GM13976 (cell line): ENCODE measurements at regions of chr6 and their contacts with region 1.

Region 1: GRCh38 chr6:89599727-89600126 is 38.8 kb downstream of the LYRM2 start:
- DNase-seq: no peak
- CTCF ChIP-seq: no peak

Region 2: GRCh38 chr6:89237158-89237820 is 362.4 kb before region 1 on chr6:
- in situ Hi-C with region 1: no loop called
- DNase-seq: no peak
- CTCF ChIP-seq: no peak

Region 3: DNA sequence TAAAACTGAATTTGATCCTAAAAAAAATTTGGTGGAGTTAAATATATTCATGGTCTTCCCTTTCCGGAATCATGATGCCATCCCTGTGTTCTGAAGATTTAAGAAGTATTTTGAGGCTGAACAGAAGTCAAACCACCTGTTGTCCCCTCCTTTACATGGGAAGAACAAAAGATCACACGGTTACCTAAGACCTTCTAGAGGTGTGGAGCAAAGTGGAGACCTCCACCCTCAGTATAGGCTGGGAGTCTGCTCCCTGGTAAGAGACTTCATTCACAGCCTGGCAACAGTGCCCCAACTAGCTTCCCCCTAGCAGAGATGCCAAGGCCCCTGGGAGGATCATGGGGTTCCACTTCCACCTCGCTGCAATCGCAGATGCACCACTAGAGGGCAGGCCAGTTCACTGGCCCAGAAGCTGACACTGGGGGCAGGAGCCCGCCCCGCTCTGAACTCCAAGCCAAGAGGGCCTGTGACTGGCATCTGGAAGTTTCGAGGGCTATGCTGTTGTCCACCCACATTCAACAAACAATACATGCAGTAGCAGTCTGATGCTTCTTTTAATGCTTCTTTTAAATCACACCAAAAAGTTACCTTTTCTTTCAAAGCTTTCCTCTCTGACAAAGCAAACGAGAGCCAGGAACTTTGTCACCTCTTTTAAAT is 227.8 kb before region 1 on chr6:
- in situ Hi-C with region 1: no loop called
- DNase-seq: peak; percentile 60
- CTCF ChIP-seq: peak; percentile 96

Region 4: DNA sequence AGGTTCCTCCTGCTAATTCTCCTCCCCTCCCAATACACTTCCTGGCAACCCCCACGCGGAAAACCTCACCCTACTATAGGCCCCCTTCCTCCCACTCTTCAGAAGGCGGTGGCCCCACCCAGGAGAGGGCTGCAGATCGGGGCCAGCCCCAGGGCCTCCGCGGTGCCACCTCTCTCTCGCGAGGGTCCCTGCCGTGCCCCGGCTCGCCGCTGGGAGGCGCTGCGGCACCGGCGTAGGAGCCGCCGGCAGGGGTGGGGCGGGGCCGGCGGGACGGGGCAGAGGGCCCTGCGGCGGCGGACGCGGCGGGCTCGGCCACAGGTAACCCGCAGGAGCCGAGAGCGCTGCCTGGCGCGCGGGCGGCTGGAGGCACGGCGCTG is 166.9 kb before region 1 on chr6 and contains the start of gene ANKRD6:
- in situ Hi-C with region 1: loop called (anchors 10 kb)
- DNase-seq: peak; percentile 92
- CTCF ChIP-seq: peak; percentile 97

Region 5: DNA sequence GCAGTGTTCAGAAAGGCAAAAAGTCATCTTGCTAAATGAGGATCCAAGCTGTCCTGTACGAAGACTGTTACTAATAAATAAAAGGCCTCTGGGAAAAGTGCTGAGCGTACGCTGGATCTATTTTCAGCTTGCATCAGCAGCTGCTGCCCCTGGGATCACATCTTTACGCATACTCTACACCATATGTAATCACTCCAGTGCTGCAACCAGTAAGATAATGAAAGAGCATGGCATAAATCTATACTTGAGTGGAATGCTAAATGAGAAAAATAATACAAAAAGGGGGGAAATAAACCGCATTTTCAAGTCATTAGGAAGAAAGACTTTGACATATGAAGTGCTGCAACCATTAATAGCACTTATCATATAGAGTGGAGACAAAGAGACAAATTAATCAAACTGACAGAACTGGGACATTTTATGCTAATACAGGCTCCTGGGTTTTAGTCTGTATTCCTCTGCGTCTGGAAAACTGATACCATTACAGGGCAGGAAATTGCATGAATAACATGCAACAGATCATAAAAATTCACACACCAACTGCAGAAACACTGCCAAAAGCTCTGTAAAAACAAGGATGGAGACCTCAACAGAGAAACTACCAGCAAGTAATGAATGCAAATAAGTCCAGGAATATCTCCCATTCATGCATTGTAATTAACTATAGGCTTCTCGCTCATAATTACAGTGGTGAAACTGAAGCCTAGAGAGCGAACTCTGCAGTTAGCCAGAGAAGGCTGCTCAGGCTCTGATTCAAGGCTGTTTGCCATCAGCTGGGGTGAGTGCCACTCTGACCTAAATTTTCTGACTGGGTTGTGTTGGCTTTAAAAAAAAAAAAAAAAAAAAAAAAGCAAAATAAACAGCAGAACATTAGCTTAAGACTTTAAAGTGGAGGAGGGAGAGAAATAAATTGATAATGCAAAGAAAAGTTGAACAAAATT is 378.4 kb after region 1 on chr6:
- in situ Hi-C with region 1: no loop called
- DNase-seq: no peak
- CTCF ChIP-seq: no peak